ENCODE measurements at regions of chr20 and their contacts with region 1.

Region 1: DNA sequence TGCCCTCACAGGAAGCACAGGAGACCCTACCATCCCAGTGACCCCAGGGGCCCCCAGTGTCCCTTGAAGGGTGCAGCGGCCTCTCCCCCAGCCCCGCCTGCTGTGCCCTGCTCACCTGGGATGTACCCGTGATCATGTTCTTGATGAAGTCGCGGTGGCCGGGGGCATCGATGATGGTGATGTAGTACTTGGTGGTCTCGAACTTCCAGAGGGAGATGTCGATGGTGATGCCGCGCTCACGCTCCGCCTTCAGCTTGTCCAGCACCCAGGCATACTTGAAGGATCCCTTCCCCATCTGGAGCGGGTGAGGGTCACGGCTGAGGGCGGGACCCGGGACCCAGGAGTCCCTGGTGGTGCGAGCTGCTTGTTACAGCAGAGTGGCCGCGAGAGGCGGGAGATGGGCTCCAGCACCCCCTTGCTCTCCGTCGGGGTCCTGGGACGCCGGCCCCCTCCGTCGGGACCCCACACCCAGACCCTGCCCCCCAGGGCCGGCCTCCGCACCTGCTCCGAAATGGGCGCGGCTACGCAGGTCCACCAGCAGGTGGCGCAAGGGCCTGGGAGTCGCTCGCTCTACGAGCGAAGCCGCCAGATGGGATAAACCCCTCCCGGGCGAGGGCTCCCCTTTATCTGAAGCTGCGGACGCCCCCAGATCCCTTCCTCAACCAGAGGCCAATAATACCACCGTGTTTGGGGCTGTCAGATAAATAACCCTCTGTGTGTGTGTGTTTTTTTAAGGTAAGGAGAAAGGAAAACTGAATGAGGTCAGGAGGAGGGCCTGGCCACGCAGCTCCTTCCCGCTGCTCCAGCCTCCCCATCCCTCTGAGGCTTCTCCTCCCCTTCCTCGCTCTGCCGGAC is 2.9 kb downstream of the EEF1A2 start:
- DNase-seq: no peak
- H3K4me3 ChIP-seq: peak overlapping the region; percentile 23
- CTCF ChIP-seq: peak; percentile 95

Region 2: GRCh38 chr20:63475206-63475605 is 20.8 kb before region 1 on chr20:
- CTCF ChIA-PET with region 1: interaction called, 15 read pairs
- POLR2A ChIA-PET with region 1: no interaction called
- DNase-seq: no peak
- H3K4me3 ChIP-seq: no peak overlapping the region
- CTCF ChIP-seq: no peak

Region 3: DNA sequence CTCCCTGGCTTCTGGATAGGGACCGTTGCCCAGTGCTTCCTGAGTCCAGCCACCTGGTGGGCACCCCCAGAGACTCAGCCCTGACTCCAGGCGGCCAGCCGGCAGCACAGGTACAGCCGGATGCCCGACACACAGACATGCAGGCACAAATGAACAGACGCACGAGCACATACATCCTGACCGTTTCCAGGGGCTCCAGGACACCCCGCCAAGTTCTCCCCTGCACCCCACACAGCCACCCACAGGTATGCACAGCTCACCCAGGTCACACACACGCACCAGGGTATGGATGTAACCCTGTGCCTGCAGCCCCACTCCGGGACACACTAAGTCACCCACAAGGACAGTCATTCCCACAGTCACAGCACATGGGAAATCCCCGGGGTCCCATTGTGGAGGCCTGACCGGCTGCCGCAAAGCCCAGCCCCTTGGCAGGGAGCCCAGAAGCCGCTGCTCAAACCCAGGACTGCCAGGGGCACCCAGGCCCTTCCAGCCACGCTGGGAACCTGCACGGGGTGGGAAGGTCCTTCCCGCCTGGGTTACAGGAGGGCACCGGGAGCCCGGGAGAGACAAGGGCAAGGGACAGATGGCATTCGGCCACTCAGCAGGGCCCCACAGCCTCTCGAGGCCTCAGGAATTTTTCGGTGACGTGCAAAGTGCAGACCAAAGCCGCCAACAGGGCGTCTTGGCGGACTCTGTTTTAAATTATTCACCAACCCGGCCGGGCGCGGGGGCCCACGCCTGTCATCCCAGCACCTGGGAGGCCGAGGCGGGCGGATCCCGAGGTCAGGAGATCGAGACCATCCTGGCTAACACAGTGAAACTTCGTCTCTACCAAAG is 12.9 kb before region 1 on chr20:
- CTCF ChIA-PET with region 1: interaction called, 15 read pairs
- POLR2A ChIA-PET with region 1: no interaction called
- DNase-seq: no peak
- H3K4me3 ChIP-seq: no peak overlapping the region
- CTCF ChIP-seq: no peak

Region 4: GRCh38 chr20:63508072-63508768 is 12.3 kb after region 1 on chr20:
- CTCF ChIA-PET with region 1: interaction called, 26 read pairs
- POLR2A ChIA-PET with region 1: no interaction called
- DNase-seq: no peak
- H3K4me3 ChIP-seq: no peak overlapping the region
- CTCF ChIP-seq: no peak

Region 5: GRCh38 chr20:63520504-63520933 is 24.6 kb after region 1 on chr20 and contains the start of gene PPDPF:
- CTCF ChIA-PET with region 1: interaction called, 26 read pairs
- POLR2A ChIA-PET with region 1: interaction called, 7 read pairs
- DNase-seq: no peak
- H3K4me3 ChIP-seq: peak within 1 kb of the TSS; percentile 91
- CTCF ChIP-seq: no peak

Region 6: GRCh38 chr20:63973636-63974402 is 477.9 kb after region 1 on chr20:
- CTCF ChIA-PET with region 1: interaction called, 15 read pairs
- POLR2A ChIA-PET with region 1: no interaction called
- DNase-seq: no peak
- H3K4me3 ChIP-seq: peak overlapping the region; percentile 57
- CTCF ChIP-seq: peak; percentile 97